ENCODE measurements at regions of chr20 and their contacts with region 1.

Region 1: GRCh38 chr20:13231031-13231752 is 10.1 kb downstream of the ISM1 start:
- DNase-seq: peak; percentile 36
- H3K4me3 Mint-ChIP-seq: peak overlapping the region; percentile 25
- H3K27ac Mint-ChIP-seq: peak overlapping the region; percentile 84
- H3K4me1 Mint-ChIP-seq: peaks cover 35% of the 10 kb centered on the region
- H3K27me3 Mint-ChIP-seq: peaks cover 2% of the 10 kb centered on the region

Region 2: GRCh38 chr20:13212750-13213149 is 18.4 kb before region 1 on chr20:
- intact Hi-C with region 1: loop called (anchors 1 kb)
- DNase-seq: no peak
- H3K4me3 Mint-ChIP-seq: no peak overlapping the region
- H3K27ac Mint-ChIP-seq: no peak overlapping the region
- H3K4me1 Mint-ChIP-seq: peaks cover 6% of the 10 kb centered on the region
- H3K27me3 Mint-ChIP-seq: peaks cover 51% of the 10 kb centered on the region

Region 3: DNA sequence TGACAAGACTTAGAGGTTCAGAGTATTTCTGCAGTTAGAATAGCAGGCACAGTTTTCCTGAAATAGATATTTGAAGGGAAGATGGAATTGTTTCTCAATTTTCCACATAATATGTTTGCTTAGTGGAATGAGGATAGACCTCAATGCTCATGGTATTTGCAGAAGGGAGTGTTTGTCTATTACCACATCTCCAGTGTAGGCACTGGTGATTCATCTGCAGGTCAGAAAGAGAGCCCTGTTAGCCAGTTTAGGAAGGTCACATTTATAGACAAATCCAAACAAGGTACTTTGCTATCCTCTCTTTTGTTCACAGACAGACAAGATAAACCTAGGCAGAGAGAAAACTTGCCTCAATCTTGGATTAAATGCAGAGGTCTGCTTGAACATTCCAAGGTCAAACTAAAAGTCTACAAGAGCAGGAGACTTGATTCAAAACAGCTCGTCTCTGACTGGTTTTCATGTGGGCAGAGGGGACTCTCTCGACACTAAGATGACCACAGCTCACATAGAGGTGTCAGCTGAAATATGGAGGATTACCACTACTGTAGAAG is 12.7 kb after region 1 on chr20:
- intact Hi-C with region 1: loop called (anchors 1 kb)
- DNase-seq: no peak
- H3K4me3 Mint-ChIP-seq: no peak overlapping the region
- H3K27ac Mint-ChIP-seq: no peak overlapping the region
- H3K4me1 Mint-ChIP-seq: peaks cover 29% of the 10 kb centered on the region
- H3K27me3 Mint-ChIP-seq: peaks cover 2% of the 10 kb centered on the region

Region 4: GRCh38 chr20:13336308-13337089 is 105.3 kb after region 1 on chr20:
- intact Hi-C with region 1: loop called (anchors 5 kb)
- DNase-seq: no peak
- H3K4me3 Mint-ChIP-seq: no peak overlapping the region
- H3K27ac Mint-ChIP-seq: no peak overlapping the region
- H3K4me1 Mint-ChIP-seq: peaks cover 36% of the 10 kb centered on the region
- H3K27me3 Mint-ChIP-seq: no peaks in the 10 kb centered on the region

Region 5: GRCh38 chr20:13425381-13426135 is 194.4 kb after region 1 on chr20:
- intact Hi-C with region 1: no loop called
- DNase-seq: no peak
- H3K4me3 Mint-ChIP-seq: no peak overlapping the region
- H3K27ac Mint-ChIP-seq: no peak overlapping the region
- H3K4me1 Mint-ChIP-seq: peaks cover 15% of the 10 kb centered on the region
- H3K27me3 Mint-ChIP-seq: no peaks in the 10 kb centered on the region